ENCODE measurements at regions of chr19 and their contacts with region 1.

Region 1: GRCh38 chr19:55503502-55504251 is 15.4 kb downstream of the SSC5D start:
- DNase-seq: peak; percentile 95 to 98 (median 98)
- ATAC-seq: peak; percentile 97
- H3K4me3 ChIP-seq: peak overlapping the region; percentile 31
- H3K27ac ChIP-seq: peak overlapping the region; percentile 48
- H3K4me1 ChIP-seq: no peaks in the 10 kb centered on the region
- H3K27me3 ChIP-seq: no peaks in the 10 kb centered on the region

Region 2: DNA sequence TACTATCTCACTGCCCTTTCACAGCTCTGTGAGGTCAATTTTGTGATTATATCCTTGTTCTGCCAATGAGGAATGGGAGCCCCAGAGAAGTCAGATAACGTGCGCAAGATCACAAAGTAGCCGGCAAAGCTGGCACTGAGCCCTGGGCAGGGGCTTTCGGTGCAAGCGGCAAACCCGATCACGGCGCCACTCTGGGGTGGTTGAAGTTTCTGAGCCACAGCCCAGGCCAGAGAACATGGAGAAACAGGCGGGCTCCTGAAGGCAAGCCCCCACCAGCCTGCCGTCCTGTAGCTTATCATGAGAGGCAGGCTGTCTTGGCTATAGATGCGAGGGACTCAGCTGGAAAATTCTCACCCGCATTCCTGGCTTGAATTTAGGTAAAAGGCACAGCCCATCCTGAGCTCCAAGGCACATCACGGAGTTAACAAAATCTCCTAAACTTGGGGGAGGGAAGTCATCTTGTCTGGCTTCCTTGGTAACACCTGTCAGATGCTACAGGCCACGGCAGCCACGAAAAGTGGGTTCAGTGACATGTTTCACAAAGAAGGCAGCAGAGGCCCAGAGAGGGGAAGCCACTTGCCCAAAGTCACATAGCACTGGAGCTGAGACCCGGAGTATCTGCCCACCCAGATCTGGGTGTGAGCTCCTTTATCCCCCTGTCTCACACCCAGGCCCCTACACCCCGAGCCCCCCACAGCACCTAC is 367.1 kb before region 1 on chr19:
- intact Hi-C with region 1: loop called in 2 of 4 experiments (anchors 5 to 10 kb)
- DNase-seq: peak in 1 of 3 donors; percentile 20
- ATAC-seq: no peak
- H3K4me3 ChIP-seq: no peak overlapping the region
- H3K27ac ChIP-seq: no peak overlapping the region
- H3K4me1 ChIP-seq: no peaks in the 10 kb centered on the region
- H3K27me3 ChIP-seq: no peaks in the 10 kb centered on the region

Region 3: DNA sequence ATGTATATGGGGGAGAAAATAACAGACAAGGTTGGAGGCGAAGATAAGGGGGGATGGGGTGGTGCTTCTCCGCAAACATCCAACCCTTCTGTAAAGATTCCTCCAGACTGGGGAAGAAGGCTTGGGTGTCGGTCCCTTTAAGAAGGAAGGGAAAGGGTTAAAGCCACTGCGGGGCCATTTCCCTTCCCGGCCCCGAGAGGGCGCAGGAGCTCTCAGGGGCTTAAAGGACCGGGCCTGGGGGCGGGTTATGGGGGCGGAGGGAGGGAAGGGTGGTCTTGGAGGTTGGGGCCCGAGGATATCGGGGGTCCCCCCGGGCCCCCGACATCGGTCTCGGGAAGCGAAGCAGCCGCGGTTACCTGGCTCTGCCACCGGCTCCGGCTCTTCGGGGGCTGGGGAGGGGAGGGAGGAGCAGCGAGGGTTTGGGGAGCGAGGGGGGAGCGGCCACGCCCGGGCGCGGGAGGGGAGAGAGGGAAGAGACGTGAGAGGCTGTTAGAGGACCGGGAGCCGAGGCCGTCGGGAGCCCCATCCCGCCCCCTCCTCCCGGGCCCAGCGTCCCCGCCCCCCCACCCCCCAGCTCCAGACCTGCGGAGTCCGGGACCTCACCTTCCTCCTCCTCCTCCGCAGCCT is 357.5 kb before region 1 on chr19:
- intact Hi-C with region 1: loop called in 1 of 4 experiments (anchors 10 kb)
- DNase-seq: peak in 1 of 3 donors; percentile 35
- ATAC-seq: peak in 1 of 2 donors; percentile 2
- H3K4me3 ChIP-seq: no peak overlapping the region
- H3K27ac ChIP-seq: no peak overlapping the region
- H3K4me1 ChIP-seq: no peaks in the 10 kb centered on the region
- H3K27me3 ChIP-seq: no peaks in the 10 kb centered on the region

Region 4: GRCh38 chr19:55467236-55468053 is 36.2 kb before region 1 on chr19:
- intact Hi-C with region 1: loop called (anchors 2 to 5 kb)
- DNase-seq: peak; percentile 78 to 92 (median 92)
- ATAC-seq: peak; percentile 90 to 91
- H3K4me3 ChIP-seq: no peak overlapping the region
- H3K27ac ChIP-seq: no peak overlapping the region
- H3K4me1 ChIP-seq: no peaks in the 10 kb centered on the region
- H3K27me3 ChIP-seq: no peaks in the 10 kb centered on the region

Measured in right cardiac atrium (tissue), 5 donors.